Activated CD4-positive, alpha-beta T cell treated with anti-CD3 and anti-CD28 coated beads for 36 hours (primary cell): ENCODE measurements at regions of chr1 and their contacts with region 1.

Region 1: GRCh38 chr1:221741711-221742554 is at the start of gene DUSP10:
- DNase-seq: peak; percentile 99
- ATAC-seq: peak; percentile 90
- H3K4me3 Mint-ChIP-seq: no peak within 1 kb of the TSS
- H3K27ac Mint-ChIP-seq: no peak within 1 kb of the TSS
- H3K4me1 Mint-ChIP-seq: peaks cover 33% of the 10 kb centered on the region
- H3K27me3 Mint-ChIP-seq: no peaks in the 10 kb centered on the region
- total RNA-seq, gene DUSP10: 7.3 to 9.2 TPM

Region 2: GRCh38 chr1:221335161-221336101 is 406.5 kb before region 1 on chr1:
- CTCF ChIA-PET with region 1: no interaction called
- POLR2A ChIA-PET with region 1: no interaction called
- intact Hi-C with region 1: no loop called
- DNase-seq: no peak
- ATAC-seq: peak; percentile 47
- H3K4me3 Mint-ChIP-seq: no peak overlapping the region
- H3K27ac Mint-ChIP-seq: no peak overlapping the region
- H3K4me1 Mint-ChIP-seq: peaks cover 6% of the 10 kb centered on the region
- H3K27me3 Mint-ChIP-seq: peaks cover 8% of the 10 kb centered on the region

Region 3: GRCh38 chr1:221419513-221420088 is 322.3 kb before region 1 on chr1:
- CTCF ChIA-PET with region 1: no interaction called
- POLR2A ChIA-PET with region 1: no interaction called
- intact Hi-C with region 1: no loop called
- DNase-seq: no peak
- ATAC-seq: no peak
- H3K4me3 Mint-ChIP-seq: no peak overlapping the region
- H3K27ac Mint-ChIP-seq: no peak overlapping the region
- H3K4me1 Mint-ChIP-seq: no peaks in the 10 kb centered on the region
- H3K27me3 Mint-ChIP-seq: peaks cover 3% of the 10 kb centered on the region

Region 4: GRCh38 chr1:221543529-221544120 is 198.3 kb before region 1 on chr1:
- CTCF ChIA-PET with region 1: no interaction called
- POLR2A ChIA-PET with region 1: no interaction called
- intact Hi-C with region 1: loop called in 1 of 2 experiments (anchors 5 kb)
- DNase-seq: no peak
- ATAC-seq: no peak
- H3K4me3 Mint-ChIP-seq: no peak overlapping the region
- H3K27ac Mint-ChIP-seq: no peak overlapping the region
- H3K4me1 Mint-ChIP-seq: no peaks in the 10 kb centered on the region
- H3K27me3 Mint-ChIP-seq: peaks cover 9% of the 10 kb centered on the region

Region 5: GRCh38 chr1:221655766-221656305 is 86.1 kb before region 1 on chr1:
- CTCF ChIA-PET with region 1: no interaction called
- POLR2A ChIA-PET with region 1: no interaction called
- intact Hi-C with region 1: no loop called
- DNase-seq: no peak
- ATAC-seq: no peak
- H3K4me3 Mint-ChIP-seq: no peak overlapping the region
- H3K27ac Mint-ChIP-seq: no peak overlapping the region
- H3K4me1 Mint-ChIP-seq: peaks cover 4% of the 10 kb centered on the region
- H3K27me3 Mint-ChIP-seq: no peaks in the 10 kb centered on the region

Region 6: DNA sequence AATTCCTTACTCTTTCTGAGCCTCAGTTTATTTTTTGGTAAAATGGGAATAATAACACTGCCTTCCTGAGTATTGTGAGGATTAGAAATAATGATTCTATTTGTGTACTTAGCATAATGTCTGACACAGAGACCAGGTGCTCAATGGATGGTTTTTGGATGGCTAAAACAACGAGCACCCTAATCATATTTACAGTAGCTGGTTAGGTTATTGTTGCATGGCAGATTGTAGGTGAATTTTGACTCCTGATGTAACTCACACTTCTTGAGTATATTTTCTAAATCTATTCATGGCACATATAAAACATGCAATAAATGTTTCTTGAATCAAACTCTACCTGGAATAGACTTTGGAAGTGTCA is 11.9 kb after region 1 on chr1:
- CTCF ChIA-PET with region 1: interaction called, 6 read pairs
- POLR2A ChIA-PET with region 1: no interaction called
- intact Hi-C with region 1: loop called in 1 of 2 experiments (anchors 1 kb)
- DNase-seq: no peak
- ATAC-seq: peak; percentile 47
- H3K4me3 Mint-ChIP-seq: no peak overlapping the region
- H3K27ac Mint-ChIP-seq: peak overlapping the region; percentile 77
- H3K4me1 Mint-ChIP-seq: peaks cover 37% of the 10 kb centered on the region
- H3K27me3 Mint-ChIP-seq: peaks cover 5% of the 10 kb centered on the region

Region 7: GRCh38 chr1:221829327-221830015 is 87.5 kb after region 1 on chr1:
- CTCF ChIA-PET with region 1: interaction called, 4 read pairs
- POLR2A ChIA-PET with region 1: interaction called, 9 read pairs
- intact Hi-C with region 1: loop called in 1 of 2 experiments (anchors 2 kb)
- DNase-seq: peak; percentile 79
- ATAC-seq: peak; percentile 96
- H3K4me3 Mint-ChIP-seq: peak overlapping the region; percentile 31
- H3K27ac Mint-ChIP-seq: peak overlapping the region; percentile 86
- H3K4me1 Mint-ChIP-seq: peaks cover 55% of the 10 kb centered on the region
- H3K27me3 Mint-ChIP-seq: no peaks in the 10 kb centered on the region

Region 8: DNA sequence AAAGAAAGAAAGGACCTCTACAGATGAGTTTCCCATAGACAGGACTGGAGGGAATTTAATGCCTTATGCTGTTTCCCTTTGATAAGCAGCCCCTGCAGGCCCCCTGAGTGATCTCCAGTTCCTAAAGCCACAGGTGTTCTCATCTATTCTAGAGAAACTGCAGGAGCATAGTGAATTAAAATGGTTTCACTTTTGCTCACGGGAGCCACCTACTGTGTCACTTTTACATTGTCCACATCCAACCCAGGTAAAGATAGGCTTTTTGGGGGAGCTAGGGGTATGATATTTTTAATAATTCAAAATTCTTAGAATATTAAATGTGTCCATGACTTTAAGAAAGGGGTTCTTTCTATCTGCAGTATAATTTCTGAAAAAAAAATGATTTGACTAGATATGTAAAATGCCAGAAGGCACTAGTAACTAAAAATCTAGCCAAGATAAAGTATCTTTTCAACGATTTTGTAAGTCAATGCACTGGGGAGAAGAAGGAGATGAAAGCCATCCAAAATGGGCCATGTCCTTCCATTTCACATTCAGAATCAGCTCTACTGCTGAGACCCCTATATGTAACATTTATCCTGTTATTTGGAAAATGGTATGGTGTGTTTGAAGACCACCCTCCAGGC is 267.3 kb after region 1 on chr1:
- CTCF ChIA-PET with region 1: interaction called, 5 read pairs
- POLR2A ChIA-PET with region 1: no interaction called
- intact Hi-C with region 1: loop called (anchors 5 kb)
- DNase-seq: peak; percentile 47
- ATAC-seq: peak; percentile 71
- H3K4me3 Mint-ChIP-seq: no peak overlapping the region
- H3K27ac Mint-ChIP-seq: no peak overlapping the region
- H3K4me1 Mint-ChIP-seq: no peaks in the 10 kb centered on the region
- H3K27me3 Mint-ChIP-seq: peaks cover 7% of the 10 kb centered on the region

Region 9: GRCh38 chr1:222617367-222617951 is 875.5 kb after region 1 on chr1:
- CTCF ChIA-PET with region 1: no interaction called
- POLR2A ChIA-PET with region 1: no interaction called
- intact Hi-C with region 1: loop called in 1 of 2 experiments (anchors 10 kb)
- DNase-seq: peak; percentile 94
- ATAC-seq: peak; percentile 95
- H3K4me3 Mint-ChIP-seq: peak overlapping the region; percentile 83
- H3K27ac Mint-ChIP-seq: peak overlapping the region; percentile 88
- H3K4me1 Mint-ChIP-seq: peaks cover 31% of the 10 kb centered on the region
- H3K27me3 Mint-ChIP-seq: peaks cover 11% of the 10 kb centered on the region